ENCODE measurements at regions of chr6 and their contacts with region 1.

Region 1: DNA sequence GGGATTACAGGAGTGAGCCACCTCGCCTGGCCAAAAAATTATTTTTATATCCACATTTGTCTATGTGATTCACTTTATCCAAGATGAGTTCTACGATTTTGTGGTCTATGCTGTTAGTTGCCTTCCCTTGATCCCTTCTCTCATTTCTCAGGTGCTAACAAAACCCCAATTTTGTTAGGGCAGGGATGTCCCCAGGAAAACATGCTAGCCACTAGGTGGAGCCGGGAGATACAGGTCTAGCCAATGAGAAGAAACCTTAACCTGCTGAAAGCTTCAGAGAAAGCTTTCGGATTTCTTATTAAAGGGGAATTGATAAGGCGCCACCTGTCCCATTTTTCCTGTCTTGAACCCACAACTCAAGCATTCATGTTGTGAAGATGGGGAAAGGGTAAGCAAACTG is 167.4 kb upstream of the OLIG3 start:
- DNase-seq: peak; percentile 41
- H3K4me3 ChIP-seq: no peak overlapping the region
- H3K27ac ChIP-seq: no peak overlapping the region
- H3K4me1 ChIP-seq: no peaks in the 10 kb centered on the region
- H3K27me3 ChIP-seq: peaks cover 3 to 10% of the 10 kb centered on the region in 2 experiments
- CTCF ChIP-seq: peak; percentile 41 to 57
- POLR2A ChIP-seq: no peak

Region 2: GRCh38 chr6:137975188-137975940 is 313.8 kb after region 1 on chr6:
- CTCF ChIA-PET with region 1: interaction called, 22 read pairs
- POLR2A ChIA-PET with region 1: no interaction called
- dilution Hi-C with region 1: no loop called
- intact Hi-C with region 1: no loop called
- DNase-seq: peak; percentile 27
- H3K4me3 ChIP-seq: no peak overlapping the region
- H3K27ac ChIP-seq: no peak overlapping the region
- H3K4me1 ChIP-seq: no peaks in the 10 kb centered on the region
- H3K27me3 ChIP-seq: peaks cover 0 to under 1% of the 10 kb centered on the region in 2 experiments
- CTCF ChIP-seq: no peak
- POLR2A ChIP-seq: no peak

Region 3: DNA sequence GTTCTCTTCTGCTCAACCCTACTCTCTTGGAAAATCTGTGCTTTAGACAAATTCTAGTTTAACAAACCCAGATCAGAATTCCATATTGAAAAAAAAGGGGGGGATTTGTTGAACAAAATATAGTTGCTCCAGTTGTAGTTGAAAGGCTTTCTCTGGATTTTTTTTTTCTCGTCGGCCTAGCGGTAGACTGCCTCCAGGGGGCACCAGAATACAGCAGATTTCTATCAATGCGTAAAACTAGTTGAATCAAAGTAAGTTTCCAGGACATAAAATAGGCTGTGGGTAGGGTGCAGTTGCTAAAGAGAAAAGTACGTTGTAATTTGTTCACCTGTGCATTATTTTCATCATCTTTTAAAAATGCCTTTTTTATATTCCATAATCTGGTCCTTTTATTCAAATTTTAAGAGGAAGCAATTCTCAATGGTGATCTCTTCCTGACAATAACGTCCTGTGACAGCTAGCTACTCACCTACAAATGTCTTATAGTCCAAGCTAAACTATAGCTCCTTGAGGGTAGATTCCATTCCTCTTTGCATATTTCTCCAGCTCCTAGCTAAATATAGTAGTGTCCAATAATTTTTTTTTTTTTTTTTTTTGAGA is 340.2 kb after region 1 on chr6:
- CTCF ChIA-PET with region 1: interaction called, 12 read pairs
- POLR2A ChIA-PET with region 1: no interaction called
- dilution Hi-C with region 1: no loop called
- intact Hi-C with region 1: loop called (anchors 1 kb)
- DNase-seq: peak; percentile 62
- H3K4me3 ChIP-seq: no peak overlapping the region
- H3K27ac ChIP-seq: no peak overlapping the region
- H3K4me1 ChIP-seq: no peaks in the 10 kb centered on the region
- H3K27me3 ChIP-seq: no peaks in the 10 kb centered on the region
- CTCF ChIP-seq: peak; percentile 69 to 82
- POLR2A ChIP-seq: no peak

Region 4: DNA sequence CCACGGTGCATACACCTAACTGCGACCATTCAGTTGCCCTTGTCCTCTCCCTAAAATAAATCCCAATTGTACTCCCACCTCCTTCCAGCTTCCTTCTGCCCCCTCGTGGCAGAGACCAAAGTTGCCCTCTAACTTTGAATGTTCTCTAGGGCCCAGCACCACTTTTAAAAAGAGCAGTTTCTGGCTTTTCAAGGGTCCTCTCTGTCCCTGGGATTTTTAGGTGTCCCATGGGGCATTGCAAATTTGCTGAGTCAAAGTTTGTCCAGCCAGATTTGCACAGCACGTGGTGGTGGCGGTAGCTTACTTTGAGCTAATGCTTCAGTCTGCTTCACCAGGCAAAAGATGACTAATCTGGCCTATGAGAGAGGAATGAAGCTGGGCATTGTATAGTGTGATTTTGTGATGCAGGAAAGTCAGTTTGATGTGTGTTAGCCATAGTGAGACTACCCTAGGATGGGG is 345.4 kb after region 1 on chr6:
- CTCF ChIA-PET with region 1: interaction called, 12 read pairs
- POLR2A ChIA-PET with region 1: no interaction called
- dilution Hi-C with region 1: no loop called
- intact Hi-C with region 1: loop called (anchors 1 kb)
- DNase-seq: peak; percentile 27
- H3K4me3 ChIP-seq: no peak overlapping the region
- H3K27ac ChIP-seq: no peak overlapping the region
- H3K4me1 ChIP-seq: no peaks in the 10 kb centered on the region
- H3K27me3 ChIP-seq: no peaks in the 10 kb centered on the region
- CTCF ChIP-seq: peak; percentile 50 to 63
- POLR2A ChIP-seq: no peak

Measured in endothelial cell of umbilical vein (primary cell).